Natural killer cell (primary cell): ENCODE measurements at regions of chr1 and their contacts with region 1.

Region 1: GRCh38 chr1:64948905-64949833 is 17.2 kb downstream of the JAK1 start:
- DNase-seq: peak in 1 of 2 donors; percentile 57
- ATAC-seq: peak; percentile 69 to 79 (median 74)
- H3K4me3 ChIP-seq: no peak overlapping the region
- H3K4me3 Mint-ChIP-seq: peak overlapping the region; percentile 69
- H3K27ac ChIP-seq: peak overlapping the region; percentile 69
- H3K27ac Mint-ChIP-seq: no peak overlapping the region
- H3K4me1 ChIP-seq: peaks cover 44% of the 10 kb centered on the region
- H3K4me1 Mint-ChIP-seq: peaks cover 75 to 83% of the 10 kb centered on the region in 2 donors
- H3K27me3 ChIP-seq: no peaks in the 10 kb centered on the region
- H3K27me3 Mint-ChIP-seq: no peaks in the 10 kb centered on the region
- CTCF ChIP-seq: no peak

Region 2: GRCh38 chr1:64917328-64917861 is 31.8 kb before region 1 on chr1:
- intact Hi-C with region 1: no loop called
- DNase-seq: no peak
- ATAC-seq: peak; percentile 11 to 45 (median 13)
- H3K4me3 ChIP-seq: no peak overlapping the region
- H3K4me3 Mint-ChIP-seq: peak overlapping the region; percentile 72
- H3K27ac ChIP-seq: peak overlapping the region; percentile 17
- H3K27ac Mint-ChIP-seq: peak overlapping the region; percentile 84 to 93
- H3K4me1 ChIP-seq: peaks cover 64% of the 10 kb centered on the region
- H3K4me1 Mint-ChIP-seq: peaks cover 94 to 95% of the 10 kb centered on the region in 2 donors
- H3K27me3 ChIP-seq: no peaks in the 10 kb centered on the region
- H3K27me3 Mint-ChIP-seq: no peaks in the 10 kb centered on the region
- CTCF ChIP-seq: no peak

Region 3: GRCh38 chr1:64928325-64928724 is 20.8 kb before region 1 on chr1:
- intact Hi-C with region 1: loop called (anchors 2 kb)
- DNase-seq: no peak
- ATAC-seq: no peak
- H3K4me3 ChIP-seq: no peak overlapping the region
- H3K4me3 Mint-ChIP-seq: peak overlapping the region; percentile 68
- H3K27ac ChIP-seq: peak overlapping the region; percentile 25
- H3K27ac Mint-ChIP-seq: peak overlapping the region; percentile 84 to 93
- H3K4me1 ChIP-seq: peaks cover 60% of the 10 kb centered on the region
- H3K4me1 Mint-ChIP-seq: peaks cover 95 to 97% of the 10 kb centered on the region in 2 donors
- H3K27me3 ChIP-seq: no peaks in the 10 kb centered on the region
- H3K27me3 Mint-ChIP-seq: no peaks in the 10 kb centered on the region
- CTCF ChIP-seq: no peak

Region 4: GRCh38 chr1:64986903-64987871 is 38.0 kb after region 1 on chr1:
- intact Hi-C with region 1: no loop called
- DNase-seq: no peak
- ATAC-seq: peak in 1 of 3 donors; percentile 44
- H3K4me3 ChIP-seq: no peak overlapping the region
- H3K4me3 Mint-ChIP-seq: no peak overlapping the region
- H3K27ac ChIP-seq: no peak overlapping the region
- H3K27ac Mint-ChIP-seq: no peak overlapping the region
- H3K4me1 ChIP-seq: peaks cover 4% of the 10 kb centered on the region
- H3K4me1 Mint-ChIP-seq: peaks cover 11 to 16% of the 10 kb centered on the region in 2 donors
- H3K27me3 ChIP-seq: no peaks in the 10 kb centered on the region
- H3K27me3 Mint-ChIP-seq: no peaks in the 10 kb centered on the region
- CTCF ChIP-seq: no peak